ENCODE measurements at regions of chr4 and their contacts with region 1.

Region 1: GRCh38 chr4:1351854-1352633 is 5.0 kb downstream of the UVSSA start:
- DNase-seq: peak; percentile 94
- ATAC-seq: peak; percentile 27
- H3K4me3 Mint-ChIP-seq: no peak overlapping the region
- H3K27ac Mint-ChIP-seq: peak overlapping the region; percentile 70
- H3K4me1 Mint-ChIP-seq: peaks cover 31% of the 10 kb centered on the region
- H3K27me3 Mint-ChIP-seq: no peaks in the 10 kb centered on the region
- CTCF ChIP-seq: peak; percentile 94

Region 2: DNA sequence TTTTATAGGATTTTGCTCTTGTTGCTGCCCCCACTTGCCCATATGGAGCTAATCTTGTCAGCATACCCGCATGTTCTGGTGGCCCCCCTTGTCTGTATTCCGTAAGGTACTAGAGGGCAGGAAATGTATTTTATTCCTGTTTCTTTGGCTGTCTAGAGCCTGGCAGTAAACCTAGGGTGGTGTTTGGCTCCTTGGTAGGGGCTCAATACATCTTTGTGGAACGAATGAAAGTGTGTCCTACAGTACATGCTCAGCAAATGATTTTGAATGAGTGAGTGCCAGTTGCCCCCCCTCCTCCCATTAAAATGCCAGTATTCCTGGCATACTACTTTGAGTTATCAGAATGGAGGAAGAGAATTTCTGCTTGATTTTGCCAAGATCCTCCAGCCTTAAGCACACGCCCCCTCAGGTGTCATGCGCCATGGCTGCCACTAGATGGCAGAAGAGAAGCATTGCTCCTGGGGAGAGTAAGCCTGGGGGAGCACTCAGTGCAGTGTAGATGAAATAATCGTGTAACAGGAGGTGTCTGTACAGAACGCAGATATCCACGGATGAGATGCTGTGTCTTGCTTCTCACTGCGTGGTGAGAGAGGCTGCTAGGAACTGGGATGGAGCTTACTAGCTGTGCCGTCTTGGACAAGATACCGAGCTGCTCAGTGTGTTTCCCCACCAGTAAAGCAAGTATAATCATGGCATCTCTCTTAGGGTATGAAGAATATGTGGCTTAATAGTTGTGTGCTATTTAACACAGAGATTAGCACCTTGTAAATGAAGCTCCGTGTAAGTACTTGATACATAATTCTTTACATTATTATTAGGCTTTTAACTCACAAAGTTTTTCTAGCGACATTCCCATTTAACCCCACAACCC is 221.5 kb before region 1 on chr4:
- CTCF ChIA-PET with region 1: interaction called, 12 read pairs
- POLR2A ChIA-PET with region 1: no interaction called
- intact Hi-C with region 1: loop called (anchors 10 kb)
- DNase-seq: peak; percentile 72
- ATAC-seq: peak; percentile 100
- H3K4me3 Mint-ChIP-seq: no peak overlapping the region
- H3K27ac Mint-ChIP-seq: no peak overlapping the region
- H3K4me1 Mint-ChIP-seq: no peaks in the 10 kb centered on the region
- H3K27me3 Mint-ChIP-seq: peaks cover 3% of the 10 kb centered on the region
- CTCF ChIP-seq: peak; percentile 99

Region 3: DNA sequence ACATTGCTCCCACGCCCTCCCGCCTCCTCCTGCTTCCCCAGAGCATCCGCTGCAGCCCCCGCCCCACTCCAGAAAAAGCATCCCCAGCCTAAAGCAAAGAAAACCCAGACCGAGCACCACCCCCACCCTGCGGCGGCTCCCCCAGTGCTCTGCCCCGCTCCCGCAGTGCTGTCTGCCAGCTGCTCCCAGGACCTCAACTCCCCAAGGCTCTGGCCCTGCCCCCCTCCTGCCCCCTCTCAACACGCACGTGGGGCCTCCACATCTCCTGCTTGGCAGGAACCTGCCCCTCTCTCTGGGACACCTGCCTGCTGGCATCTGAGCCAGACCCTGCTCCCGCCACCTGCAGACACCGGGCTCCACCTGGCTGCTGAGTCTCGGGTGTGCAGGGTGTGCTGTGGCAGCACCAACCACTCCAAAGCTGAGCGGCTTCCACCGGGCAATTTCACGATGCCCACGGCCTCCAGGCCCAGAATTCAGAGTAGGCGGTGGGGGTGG is 252.7 kb after region 1 on chr4:
- CTCF ChIA-PET with region 1: interaction called, 11 read pairs
- POLR2A ChIA-PET with region 1: no interaction called
- intact Hi-C with region 1: no loop called
- DNase-seq: peak; percentile 62
- ATAC-seq: peak; percentile 77
- H3K4me3 Mint-ChIP-seq: peak overlapping the region; percentile 53
- H3K27ac Mint-ChIP-seq: peak overlapping the region; percentile 42
- H3K4me1 Mint-ChIP-seq: peaks cover 25% of the 10 kb centered on the region
- H3K27me3 Mint-ChIP-seq: no peaks in the 10 kb centered on the region
- CTCF ChIP-seq: no peak

Region 4: DNA sequence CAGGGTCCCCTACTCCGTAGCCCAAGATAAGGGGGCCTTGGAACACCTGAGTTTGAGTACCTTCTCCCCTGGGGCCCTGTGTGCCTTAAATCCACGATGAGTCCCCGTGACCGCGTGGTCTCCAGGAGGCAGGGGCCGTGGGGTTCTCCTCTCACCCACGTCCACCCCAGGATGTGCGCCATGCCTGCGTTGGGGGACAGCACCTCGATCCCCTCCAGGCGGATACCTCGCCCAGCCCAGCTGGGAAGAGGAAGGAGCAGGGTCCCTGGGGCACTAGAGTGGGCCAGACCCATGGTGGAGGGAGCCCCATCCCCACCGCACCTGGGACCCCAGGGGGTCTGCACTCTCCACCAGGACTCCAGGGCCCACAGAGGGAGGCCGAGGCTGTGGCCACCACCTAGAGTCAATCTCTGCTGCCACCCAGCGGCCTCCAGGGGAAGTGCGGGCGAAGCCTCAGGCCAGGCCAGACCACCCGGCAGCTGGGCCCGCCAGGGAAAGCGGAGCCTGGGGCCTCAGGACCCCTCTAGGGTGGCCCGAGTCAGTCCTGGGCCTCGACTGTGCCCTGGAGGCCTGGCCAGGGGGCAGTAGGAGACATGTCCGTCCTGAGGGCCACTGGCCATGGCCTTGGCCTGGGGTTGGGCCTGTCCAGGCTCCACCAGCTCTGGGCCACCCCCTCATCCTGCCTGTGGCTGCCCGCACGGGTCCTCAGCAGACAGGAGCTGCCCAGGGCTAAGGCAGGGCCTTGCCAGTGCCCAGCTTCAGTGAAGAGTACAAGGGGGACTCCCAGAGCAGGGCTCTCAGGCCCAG is 277.1 kb after region 1 on chr4:
- CTCF ChIA-PET with region 1: interaction called, 18 read pairs
- POLR2A ChIA-PET with region 1: interaction called, 3 read pairs
- intact Hi-C with region 1: no loop called
- DNase-seq: peak; percentile 80
- ATAC-seq: peak; percentile 98
- H3K4me3 Mint-ChIP-seq: no peak overlapping the region
- H3K27ac Mint-ChIP-seq: no peak overlapping the region
- H3K4me1 Mint-ChIP-seq: no peaks in the 10 kb centered on the region
- H3K27me3 Mint-ChIP-seq: no peaks in the 10 kb centered on the region
- CTCF ChIP-seq: peak; percentile 98

Measured in activated CD8-positive, alpha-beta T cell treated with anti-CD3 and anti-CD28 coated beads for 36 hours (primary cell).